ENCODE measurements at regions of chr1 and their contacts with region 1.

Region 1: DNA sequence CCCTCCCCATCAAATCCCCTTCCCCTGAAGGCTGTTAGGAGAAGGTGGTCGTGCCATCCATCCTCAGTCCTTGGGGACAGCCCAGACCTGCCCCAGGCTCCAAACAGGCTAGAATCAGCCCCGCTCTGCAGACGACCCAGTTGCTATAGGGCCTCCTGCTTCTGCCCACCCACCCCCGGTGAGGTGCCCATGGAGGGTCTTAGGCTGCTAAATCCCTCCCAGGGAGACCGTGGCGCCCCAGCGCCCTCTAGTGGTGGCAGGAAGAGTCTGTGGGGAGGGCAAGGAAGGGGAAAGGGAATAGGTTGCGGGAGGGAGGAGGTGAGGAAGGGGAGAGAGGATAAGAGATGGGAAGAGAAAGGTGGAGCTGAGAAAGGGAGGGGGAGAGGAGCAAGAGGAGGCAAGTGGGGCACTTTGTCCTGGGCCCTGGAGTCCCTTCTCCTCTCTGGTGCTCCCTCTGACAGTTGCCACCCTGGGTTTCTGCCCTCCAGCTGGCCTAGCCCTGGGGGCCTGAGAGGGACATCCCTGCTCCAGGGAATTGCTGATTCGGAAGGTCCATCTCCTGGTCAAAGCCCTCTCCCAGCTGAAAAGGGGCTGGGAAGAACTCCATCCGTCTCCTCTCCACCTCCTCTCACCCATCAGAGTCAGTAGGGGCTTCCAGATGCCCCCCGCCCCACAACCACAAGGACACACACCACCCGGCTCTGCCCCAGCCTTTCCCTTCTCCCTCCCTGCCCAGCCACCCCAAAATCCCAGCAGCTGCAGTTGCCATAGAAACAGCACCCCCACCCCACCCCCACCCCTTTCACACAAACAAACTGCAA is 55.4 kb downstream of the CAMK2N1 start:
- DNase-seq: peak in 1 of 10 donors; percentile 60
- H3K4me3 ChIP-seq: no peak overlapping the region
- H3K27ac ChIP-seq: peak overlapping the region in 34 of 59 donors; percentile 18 to 80 (median 57)
- H3K27me3 ChIP-seq: no peaks in the 10 kb centered on the region
- CTCF ChIP-seq: peak; percentile 31 to 76 (median 62)

Region 2: GRCh38 chr1:20371411-20371810 is 59.2 kb before region 1 on chr1:
- intact Hi-C with region 1: loop called (anchors 5 kb)
- DNase-seq: no peak
- H3K4me3 ChIP-seq: no peak overlapping the region
- H3K27ac ChIP-seq: no peak overlapping the region
- H3K27me3 ChIP-seq: peaks cover 0 to 10% (median 0%) of the 10 kb centered on the region in 45 donors
- CTCF ChIP-seq: no peak

Region 3: DNA sequence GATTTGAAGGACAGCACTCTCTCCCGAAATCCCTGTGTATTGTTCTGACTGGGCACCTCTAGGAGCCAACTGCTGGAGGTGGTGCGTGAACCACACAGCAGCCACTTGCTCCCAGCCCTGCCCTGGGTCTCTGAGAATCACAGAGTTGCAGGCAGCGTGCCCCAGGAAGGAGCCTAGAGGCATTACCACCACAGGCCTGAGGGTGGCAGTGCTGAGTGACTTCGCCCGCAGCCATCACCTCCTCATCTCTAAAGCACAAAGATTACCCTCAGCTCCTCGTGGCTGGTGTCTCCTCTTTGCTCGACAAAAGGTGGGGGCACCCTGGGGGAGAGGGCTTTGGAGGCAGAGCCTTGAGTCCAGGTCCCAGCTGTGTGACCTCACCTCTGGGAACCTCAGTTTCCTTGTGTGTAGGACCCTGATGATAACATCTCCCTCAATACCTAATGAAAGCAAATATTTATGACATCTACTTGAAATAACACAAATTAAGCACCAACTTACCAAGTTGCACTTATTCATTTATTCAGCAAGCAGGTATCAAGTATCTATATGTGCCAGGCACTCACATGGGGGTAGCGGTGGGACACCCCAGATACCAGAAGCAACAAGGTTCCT is 53.6 kb before region 1 on chr1:
- intact Hi-C with region 1: loop called (anchors 5 kb)
- DNase-seq: peak; percentile 48 to 80 (median 64)
- H3K4me3 ChIP-seq: no peak overlapping the region
- H3K27ac ChIP-seq: peak overlapping the region in 2 of 59 donors; percentile 4 to 46
- H3K27me3 ChIP-seq: no peaks in the 10 kb centered on the region
- CTCF ChIP-seq: peak; percentile 45 to 93 (median 86)

Region 4: GRCh38 chr1:20386323-20387081 is 44.1 kb before region 1 on chr1:
- intact Hi-C with region 1: loop called in 1 of 2 experiments (anchors 5 kb)
- DNase-seq: peak in 9 of 10 donors; percentile 45 to 87 (median 79)
- H3K4me3 ChIP-seq: no peak overlapping the region
- H3K27ac ChIP-seq: peak overlapping the region in 47 of 59 donors; percentile 2 to 84 (median 41)
- H3K27me3 ChIP-seq: no peaks in the 10 kb centered on the region
- CTCF ChIP-seq: no peak

Region 5: DNA sequence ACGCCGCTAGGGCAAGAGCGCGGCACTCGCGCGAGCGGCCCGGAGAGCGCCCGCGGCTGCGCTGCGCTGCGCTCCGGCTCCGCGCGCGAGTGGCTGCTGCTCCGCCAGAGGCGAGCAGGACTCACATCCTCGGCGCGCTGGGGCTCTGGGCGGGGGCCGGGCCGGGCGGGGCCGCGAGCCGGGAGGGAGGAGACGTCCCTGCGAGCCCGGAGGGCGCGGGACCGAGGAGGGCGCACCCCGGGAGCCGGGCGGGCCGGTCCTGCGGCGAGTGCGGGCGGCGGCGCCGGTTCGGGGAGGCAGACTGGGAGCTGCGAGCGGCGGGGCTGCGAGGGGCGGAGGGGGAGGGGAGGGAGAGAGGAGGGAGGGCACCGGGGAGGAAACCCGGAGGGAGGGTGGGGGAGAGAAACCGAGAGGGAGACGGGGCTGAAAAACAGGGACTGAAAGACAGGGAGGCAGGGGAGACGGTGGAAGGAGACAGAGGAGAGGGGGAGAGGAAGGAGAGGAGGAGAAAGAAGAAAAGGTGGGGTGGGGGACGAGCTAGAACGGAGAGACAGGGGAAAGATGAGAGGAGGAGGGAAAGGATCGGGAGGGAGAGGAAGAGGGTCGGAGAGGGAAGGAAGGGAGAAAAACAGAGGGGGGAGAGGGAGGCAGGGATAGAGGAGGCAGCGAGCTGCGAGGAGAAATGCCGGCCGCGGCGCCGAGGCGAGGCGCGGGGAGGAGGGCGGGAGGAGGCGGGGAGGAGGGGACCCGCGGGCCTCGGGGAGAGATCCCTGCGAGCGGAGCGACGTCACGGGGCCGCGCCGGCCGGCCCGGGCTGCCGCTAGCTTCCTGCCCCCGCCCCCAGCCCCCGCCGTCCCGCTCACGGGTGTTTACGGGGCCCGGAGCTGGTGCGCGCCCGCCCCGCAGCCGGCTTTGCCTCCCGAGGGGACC is 55.2 kb after region 1 on chr1 and contains the start of gene CAMK2N1:
- intact Hi-C with region 1: loop called in 1 of 2 experiments (anchors 5 kb)
- DNase-seq: peak; percentile 52 to 93 (median 86)
- H3K4me3 ChIP-seq: peak within 1 kb of the TSS; percentile 64 to 97 (median 89)
- H3K27ac ChIP-seq: peak within 1 kb of the TSS; percentile 92 to 100 (median 99)
- H3K27me3 ChIP-seq: peaks cover 0 to 3% (median 0%) of the 10 kb centered on the region in 45 donors
- CTCF ChIP-seq: peak in 2 of 56 donors; percentile 14 to 19
- total RNA-seq, gene CAMK2N1: 248 to 798 (median 441) TPM